CD8-positive, alpha-beta T cell (primary cell): ENCODE measurements at regions of chr11 and their contacts with region 1.

Region 1: DNA sequence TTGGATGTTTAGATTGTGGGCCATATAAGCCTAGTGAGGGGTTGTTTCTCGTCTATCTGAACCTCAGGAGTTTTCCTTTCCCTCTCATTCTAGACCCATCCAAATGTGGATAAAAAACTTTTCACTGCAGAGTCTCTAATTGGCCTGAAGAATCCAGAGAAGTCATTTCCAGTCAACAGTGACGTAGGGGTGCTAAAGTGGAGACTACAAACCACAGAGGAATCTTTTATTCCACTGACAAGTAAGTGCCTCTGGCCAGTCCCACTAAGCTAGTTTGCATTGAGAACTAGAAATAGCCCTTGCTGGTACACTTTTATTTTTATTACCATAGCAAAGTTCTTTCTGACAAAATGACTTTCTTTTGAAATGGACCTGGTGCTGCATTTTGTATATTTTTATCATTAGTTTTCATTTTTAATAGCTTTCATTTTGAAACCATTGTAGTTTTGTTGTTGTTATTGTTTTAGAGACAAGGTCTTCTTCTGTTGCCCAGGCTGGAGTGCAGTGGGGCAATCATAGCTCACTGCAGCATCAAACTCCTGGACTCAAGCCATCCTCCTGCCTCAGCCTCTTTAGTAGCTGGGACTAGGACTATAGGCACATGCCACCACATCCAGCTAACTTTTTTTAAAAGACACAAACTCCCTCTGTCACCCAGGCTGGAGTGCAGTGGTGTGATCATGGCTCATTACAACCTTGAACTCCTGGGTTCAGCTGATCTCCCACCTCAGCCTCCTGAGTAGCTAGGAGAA is 14.6 kb upstream of the PHLDB1 start:
- DNase-seq: no peak
- ATAC-seq: no peak
- H3K4me3 ChIP-seq: no peak overlapping the region
- H3K4me3 Mint-ChIP-seq: no peak overlapping the region
- H3K27ac ChIP-seq: no peak overlapping the region
- H3K27ac Mint-ChIP-seq: peak overlapping the region; percentile 18
- H3K4me1 ChIP-seq: peaks cover 5% of the 10 kb centered on the region
- H3K4me1 Mint-ChIP-seq: peaks cover 18% of the 10 kb centered on the region
- H3K27me3 ChIP-seq: no peaks in the 10 kb centered on the region
- H3K27me3 Mint-ChIP-seq: no peaks in the 10 kb centered on the region
- CTCF ChIP-seq: no peak

Region 2: GRCh38 chr11:118622376-118623268 is 29.8 kb after region 1 on chr11:
- CTCF ChIA-PET with region 1: no interaction called
- POLR2A ChIA-PET with region 1: no interaction called
- intact Hi-C with region 1: no loop called
- DNase-seq: no peak
- ATAC-seq: no peak
- H3K4me3 ChIP-seq: no peak overlapping the region
- H3K4me3 Mint-ChIP-seq: no peak overlapping the region
- H3K27ac ChIP-seq: no peak overlapping the region
- H3K27ac Mint-ChIP-seq: no peak overlapping the region
- H3K4me1 ChIP-seq: peaks cover 10% of the 10 kb centered on the region
- H3K4me1 Mint-ChIP-seq: peaks cover 9% of the 10 kb centered on the region
- H3K27me3 ChIP-seq: peaks cover 0 to 4% of the 10 kb centered on the region in 2 experiments
- H3K27me3 Mint-ChIP-seq: peaks cover 16% of the 10 kb centered on the region
- CTCF ChIP-seq: no peak

Region 3: DNA sequence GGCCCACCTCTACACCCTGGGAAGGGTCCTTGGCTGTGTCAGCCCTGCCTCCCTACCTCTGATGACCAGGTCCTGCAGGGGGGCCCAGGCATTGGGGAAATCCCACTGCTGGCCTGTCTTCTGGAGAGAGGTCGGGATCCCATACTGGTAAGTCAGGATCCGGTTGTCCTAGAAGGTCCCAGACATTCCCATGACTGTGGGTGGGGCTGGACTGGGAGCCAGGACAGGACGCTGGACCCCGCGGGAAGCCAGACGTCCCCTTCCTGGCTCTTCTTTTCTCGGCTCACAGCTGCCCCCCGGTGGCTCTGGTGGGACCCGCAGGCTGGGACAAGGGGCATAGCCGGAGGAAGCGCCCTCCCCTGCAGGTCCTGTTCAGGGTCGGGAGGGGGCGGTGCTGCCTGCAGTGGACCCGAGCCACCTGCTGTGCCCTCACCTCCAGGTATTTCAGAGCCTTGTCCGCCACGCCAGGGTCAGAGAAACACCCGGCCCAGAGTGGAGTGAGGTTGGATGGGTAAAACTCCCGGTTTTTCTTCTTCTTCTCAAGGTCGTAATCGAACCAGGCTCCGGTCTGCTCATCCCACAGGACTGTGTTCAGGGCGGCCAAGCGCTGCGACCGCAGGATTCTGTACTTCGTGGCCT is 66.6 kb after region 1 on chr11:
- CTCF ChIA-PET with region 1: interaction called, 13 read pairs
- POLR2A ChIA-PET with region 1: no interaction called
- intact Hi-C with region 1: loop called (anchors 1 kb)
- DNase-seq: peak; percentile 80 to 92 (median 89)
- ATAC-seq: peak; percentile 100
- H3K4me3 ChIP-seq: no peak overlapping the region
- H3K4me3 Mint-ChIP-seq: no peak overlapping the region
- H3K27ac ChIP-seq: no peak overlapping the region
- H3K27ac Mint-ChIP-seq: no peak overlapping the region
- H3K4me1 ChIP-seq: peaks cover 12% of the 10 kb centered on the region
- H3K4me1 Mint-ChIP-seq: peaks cover 7% of the 10 kb centered on the region
- H3K27me3 ChIP-seq: no peaks in the 10 kb centered on the region
- H3K27me3 Mint-ChIP-seq: peaks cover 3% of the 10 kb centered on the region
- CTCF ChIP-seq: peak; percentile 99

Region 4: GRCh38 chr11:119567688-119568582 is 975.1 kb after region 1 on chr11:
- CTCF ChIA-PET with region 1: no interaction called
- POLR2A ChIA-PET with region 1: no interaction called
- intact Hi-C with region 1: no loop called
- DNase-seq: no peak
- ATAC-seq: no peak
- H3K4me3 ChIP-seq: no peak overlapping the region
- H3K4me3 Mint-ChIP-seq: no peak overlapping the region
- H3K27ac ChIP-seq: no peak overlapping the region
- H3K27ac Mint-ChIP-seq: no peak overlapping the region
- H3K4me1 ChIP-seq: no peaks in the 10 kb centered on the region
- H3K4me1 Mint-ChIP-seq: no peaks in the 10 kb centered on the region
- H3K27me3 ChIP-seq: no peaks in the 10 kb centered on the region
- H3K27me3 Mint-ChIP-seq: peaks cover 9% of the 10 kb centered on the region
- CTCF ChIP-seq: no peak